A549 (cell line): ENCODE measurements at regions of chr10 and their contacts with region 1.

Region 1: GRCh38 chr10:69786791-69787190 is 14.9 kb upstream of the COL13A1 start:
- DNase-seq: peak in 1 of 2 experiments; percentile 31
- ATAC-seq: peak; percentile 76 to 87; a peak in 4 of 6 replicates
- H3K4me3 ChIP-seq: no peak overlapping the region
- H3K27ac ChIP-seq: no peak overlapping the region
- H3K4me1 ChIP-seq: no peaks in the 10 kb centered on the region
- CTCF ChIP-seq: peak; percentile 33; the same call in 2 of the 3 replicates
- EP300 ChIP-seq: no peak
- POLR2A ChIP-seq: no peak
- RAD21 ChIP-seq: peak; percentile 63 to 71

Region 2: GRCh38 chr10:69728335-69728870 is 58.4 kb before region 1 on chr10:
- CTCF ChIA-PET with region 1: interaction called, 11 read pairs
- POLR2A ChIA-PET with region 1: no interaction called
- DNase-seq: peak in 1 of 2 experiments; percentile 49
- ATAC-seq: peak; percentile 36 to 49; a peak in 3 of 6 replicates
- H3K4me3 ChIP-seq: no peak overlapping the region
- H3K27ac ChIP-seq: no peak overlapping the region
- H3K4me1 ChIP-seq: peaks cover 17% of the 10 kb centered on the region; the same call in 2 of the 3 replicates
- CTCF ChIP-seq: no peak
- EP300 ChIP-seq: no peak
- POLR2A ChIP-seq: no peak
- RAD21 ChIP-seq: no peak

Region 3: GRCh38 chr10:69769395-69769992 is 17.3 kb before region 1 on chr10:
- CTCF ChIA-PET with region 1: interaction called, 103 read pairs
- POLR2A ChIA-PET with region 1: no interaction called
- DNase-seq: peak; percentile 70 to 84
- ATAC-seq: peak; percentile 92 to 96
- H3K4me3 ChIP-seq: no peak overlapping the region
- H3K27ac ChIP-seq: peak overlapping the region; percentile 77 to 84
- H3K4me1 ChIP-seq: peaks cover 25% of the 10 kb centered on the region
- CTCF ChIP-seq: no peak
- EP300 ChIP-seq: no peak
- POLR2A ChIP-seq: no peak
- RAD21 ChIP-seq: no peak

Region 4: GRCh38 chr10:69869291-69869961 is 82.6 kb after region 1 on chr10:
- CTCF ChIA-PET with region 1: no interaction called
- POLR2A ChIA-PET with region 1: no interaction called
- DNase-seq: no peak
- ATAC-seq: peak in 1 of 2 experiments; percentile 36; a peak in 3 of 6 replicates
- H3K4me3 ChIP-seq: no peak overlapping the region
- H3K27ac ChIP-seq: peak overlapping the region in 1 of 2 experiments; percentile 69; a peak in 3 of 6 replicates
- H3K4me1 ChIP-seq: peaks cover 26% of the 10 kb centered on the region
- CTCF ChIP-seq: no peak
- EP300 ChIP-seq: no peak
- POLR2A ChIP-seq: no peak
- RAD21 ChIP-seq: no peak

Region 5: DNA sequence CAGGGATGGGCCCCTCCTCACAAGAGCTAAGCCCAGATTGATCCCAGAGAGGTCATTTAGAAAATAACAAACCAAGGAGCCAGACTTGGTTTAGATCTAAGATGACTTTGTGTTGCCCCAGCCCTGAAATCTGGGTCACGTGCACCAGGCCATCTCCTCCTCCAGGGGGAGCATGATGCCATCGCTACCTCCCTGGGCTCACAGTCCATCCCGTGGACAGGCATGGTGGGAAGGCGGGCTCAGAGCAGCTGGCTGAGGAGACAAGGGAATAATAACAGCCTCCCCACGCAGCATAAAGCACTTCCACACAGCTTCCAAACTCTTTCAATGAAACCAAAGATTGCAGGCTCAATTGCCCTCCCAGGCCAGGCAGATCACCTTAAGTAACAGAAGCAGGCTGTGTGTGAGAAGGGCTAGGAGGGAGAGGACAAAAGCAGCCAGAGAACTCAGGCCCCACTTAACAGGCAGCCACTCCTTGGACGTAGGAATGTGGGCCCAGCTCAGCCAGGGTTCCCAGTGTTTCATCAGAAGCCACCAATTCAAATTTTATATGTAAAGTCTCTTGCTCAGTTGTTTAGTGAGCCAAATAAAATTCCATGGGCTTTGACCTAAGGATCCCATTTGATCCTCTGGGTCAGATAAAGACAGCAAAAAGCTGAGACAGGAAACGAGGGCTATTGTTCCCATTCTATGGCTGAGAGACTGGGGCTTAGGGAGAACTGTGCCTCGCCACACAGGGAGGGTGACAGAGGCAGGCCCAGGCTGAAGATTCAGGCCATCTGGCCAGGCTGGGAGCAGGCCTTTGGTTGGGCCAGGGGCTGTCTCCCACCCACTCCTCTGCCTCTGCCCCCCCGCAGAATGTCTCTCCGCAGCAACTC is 115.1 kb after region 1 on chr10:
- CTCF ChIA-PET with region 1: interaction called, 10 read pairs
- POLR2A ChIA-PET with region 1: no interaction called
- DNase-seq: peak; percentile 52 to 96
- ATAC-seq: peak; percentile 84 to 97
- H3K4me3 ChIP-seq: no peak overlapping the region
- H3K27ac ChIP-seq: peak overlapping the region in 1 of 2 experiments; percentile 40; a peak in 1 of 6 replicates
- H3K4me1 ChIP-seq: no peaks in the 10 kb centered on the region
- CTCF ChIP-seq: peak; percentile 47
- EP300 ChIP-seq: no peak
- POLR2A ChIP-seq: no peak
- RAD21 ChIP-seq: peak in 1 of 2 experiments; percentile 34; a peak in 1 of 5 replicates

Region 6: GRCh38 chr10:69944761-69945160 is 158.0 kb after region 1 on chr10:
- CTCF ChIA-PET with region 1: no interaction called
- POLR2A ChIA-PET with region 1: no interaction called
- DNase-seq: no peak
- ATAC-seq: peak in 1 of 2 experiments; percentile 41; a peak in 1 of 6 replicates
- H3K4me3 ChIP-seq: no peak overlapping the region
- H3K27ac ChIP-seq: no peak overlapping the region
- H3K4me1 ChIP-seq: no peaks in the 10 kb centered on the region
- CTCF ChIP-seq: no peak
- EP300 ChIP-seq: no peak
- POLR2A ChIP-seq: no peak
- RAD21 ChIP-seq: no peak